GM12878 (cell line): ENCODE measurements at regions of chr1 and their contacts with region 1.

Region 1: DNA sequence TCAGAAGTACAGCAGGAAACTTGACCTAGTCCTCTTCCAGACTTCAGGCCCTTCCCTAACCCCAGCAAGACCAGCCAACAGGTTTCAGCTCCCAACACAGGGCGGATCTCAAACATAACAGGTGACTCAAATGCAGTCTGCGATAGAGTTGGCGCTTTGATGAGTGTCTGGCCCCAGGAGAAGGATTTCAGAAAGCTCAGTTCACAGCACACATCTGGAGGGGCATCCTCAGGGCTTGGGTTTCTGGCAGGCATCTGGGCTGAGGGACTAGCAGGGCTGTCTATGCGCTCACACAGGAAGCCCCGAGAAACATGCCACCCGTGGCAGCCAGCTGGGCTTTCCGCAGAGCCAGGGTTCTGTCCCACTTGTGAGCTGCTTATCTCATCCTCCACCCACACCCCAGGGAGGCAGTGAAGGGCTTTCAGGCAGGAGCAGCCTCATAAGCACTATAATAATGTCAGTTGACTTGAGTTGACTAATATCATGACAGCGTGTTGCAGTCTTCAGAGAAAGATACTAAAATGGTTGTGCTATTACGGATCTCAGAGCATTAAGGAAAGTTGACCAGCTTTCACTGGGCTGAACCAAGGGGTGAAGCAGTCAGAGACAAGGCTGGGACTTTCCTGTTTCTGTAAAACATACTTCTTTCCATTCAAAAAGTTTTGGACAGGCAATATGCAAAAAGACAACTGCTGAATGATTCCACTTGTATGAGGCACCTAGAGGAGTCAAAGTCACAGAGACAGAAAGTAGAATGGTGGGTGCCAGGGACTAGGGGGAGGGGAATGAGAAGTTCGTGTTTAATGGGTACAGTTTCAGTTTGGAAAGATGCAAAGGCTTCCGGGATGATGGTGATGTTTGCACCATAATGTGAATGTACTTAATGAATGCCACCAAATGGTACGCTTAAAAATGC is 233.0 kb upstream of the IRF2BP2 start:
- DNase-seq: peak; percentile 95
- ATAC-seq: peak; percentile 74
- H3K4me3 ChIP-seq: peak overlapping the region; percentile 58
- H3K27ac ChIP-seq: peak overlapping the region; percentile 97
- H3K4me1 ChIP-seq: peaks cover 57% of the 10 kb centered on the region
- H3K27me3 ChIP-seq: no peaks in the 10 kb centered on the region
- CTCF ChIP-seq: no peak; a peak in 1 of 6 replicates
- EP300 ChIP-seq: peak in 1 of 2 experiments; percentile 47; a peak in 1 of 4 replicates
- POLR2A ChIP-seq: peak; percentile 81
- RAD21 ChIP-seq: peak; percentile 56

Region 2: DNA sequence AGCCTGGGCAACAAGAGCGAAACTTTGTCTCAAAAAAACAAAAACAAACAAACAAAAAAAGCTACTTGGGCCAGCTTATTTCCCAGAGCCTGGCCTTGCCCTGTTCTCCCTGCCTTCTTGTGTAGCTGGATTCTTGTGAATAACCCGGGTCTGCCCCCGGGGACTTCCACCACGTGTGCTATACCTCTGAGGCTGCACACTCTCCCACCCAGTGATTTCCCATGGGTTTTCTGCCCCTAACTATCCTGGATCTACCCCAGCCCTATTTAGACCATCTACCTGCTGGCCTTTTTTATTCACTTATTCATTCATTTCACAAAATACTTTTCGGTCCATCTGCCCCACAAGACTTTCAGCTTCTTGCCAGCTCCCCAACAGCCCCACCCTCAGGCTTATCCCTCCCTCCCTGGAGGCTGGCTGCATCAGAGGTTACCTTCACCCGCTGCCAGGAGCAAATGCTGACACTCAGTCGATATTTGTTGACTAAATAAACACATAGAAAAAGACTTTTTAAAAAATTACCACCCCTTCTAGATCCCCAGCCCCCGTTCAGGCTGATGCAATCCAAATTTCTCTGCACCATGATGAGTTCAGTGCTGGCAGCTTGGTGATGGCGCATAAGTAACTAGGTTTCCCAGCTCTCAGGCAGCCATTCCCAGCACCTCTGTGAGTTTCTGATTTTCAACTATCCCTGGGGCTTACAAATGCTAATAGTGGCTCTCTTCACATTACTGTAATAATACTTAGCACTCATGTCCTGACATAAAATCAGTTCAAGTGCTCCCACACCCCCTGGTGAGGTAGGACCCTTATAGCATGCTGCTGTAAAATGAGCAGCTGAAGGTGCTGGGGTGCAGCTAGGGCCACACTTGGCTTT is 333.3 kb before region 1 on chr1:
- CTCF ChIA-PET with region 1: interaction called, 10 read pairs
- POLR2A ChIA-PET with region 1: no interaction called
- RAD21 ChIA-PET with region 1: no interaction called
- SMC1A ChIA-PET with region 1: no interaction called
- in situ Hi-C with region 1: loop called (anchors 5 kb)
- intact Hi-C with region 1: no loop called
- DNase-seq: no peak
- ATAC-seq: peak; percentile 37
- H3K4me3 ChIP-seq: no peak overlapping the region
- H3K27ac ChIP-seq: no peak overlapping the region
- H3K4me1 ChIP-seq: no peaks in the 10 kb centered on the region
- H3K27me3 ChIP-seq: no peaks in the 10 kb centered on the region
- CTCF ChIP-seq: no peak
- EP300 ChIP-seq: no peak
- POLR2A ChIP-seq: no peak
- RAD21 ChIP-seq: no peak

Region 3: DNA sequence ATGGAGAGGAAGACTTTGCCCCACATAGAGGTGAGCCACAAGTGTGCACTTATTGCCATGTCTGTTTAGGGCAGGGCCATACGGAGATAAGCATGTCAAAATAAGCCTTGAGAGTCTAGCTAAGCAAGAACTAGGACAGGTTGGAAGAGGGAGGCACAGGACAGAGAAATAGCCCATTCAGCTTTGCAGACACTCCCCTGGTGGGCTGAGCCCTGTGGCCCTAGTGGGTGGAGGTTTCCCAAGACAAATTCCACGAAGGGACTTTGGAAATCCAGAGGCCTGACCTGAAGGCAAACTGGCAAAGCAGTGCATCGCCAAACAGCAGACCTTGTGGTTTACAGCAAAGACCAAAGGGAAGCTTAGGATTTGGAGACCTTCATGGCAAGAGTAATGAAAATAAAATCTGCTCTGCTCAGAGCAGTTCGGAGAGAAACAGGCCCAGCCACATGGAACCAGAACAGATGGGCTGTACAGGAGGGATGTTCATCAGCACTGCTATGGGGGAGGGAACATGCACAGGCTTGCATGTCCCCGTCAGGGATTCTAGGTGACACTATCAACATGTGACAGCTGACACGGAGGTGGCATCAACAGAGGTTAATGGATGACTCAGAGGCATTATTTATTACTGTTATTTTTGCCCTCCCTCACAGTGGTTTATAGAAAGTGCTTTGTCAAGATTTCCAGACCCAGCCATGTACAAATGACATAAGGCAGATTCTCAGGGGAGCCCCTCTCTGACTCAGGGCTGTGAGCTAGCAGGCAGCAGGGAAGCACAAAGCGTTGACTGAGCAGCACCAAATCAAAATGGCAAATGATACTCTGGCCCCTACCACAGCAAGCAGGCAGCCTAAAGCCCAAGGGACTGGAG is 143.0 kb before region 1 on chr1:
- CTCF ChIA-PET with region 1: interaction called, 3 read pairs
- POLR2A ChIA-PET with region 1: no interaction called
- RAD21 ChIA-PET with region 1: interaction called, 4 read pairs
- SMC1A ChIA-PET with region 1: interaction called, 10 read pairs
- in situ Hi-C with region 1: no loop called
- intact Hi-C with region 1: loop called (anchors 2 kb)
- DNase-seq: peak; percentile 83
- ATAC-seq: peak; percentile 89
- H3K4me3 ChIP-seq: no peak overlapping the region
- H3K27ac ChIP-seq: peak overlapping the region; percentile 43
- H3K4me1 ChIP-seq: peaks cover 32% of the 10 kb centered on the region
- H3K27me3 ChIP-seq: no peaks in the 10 kb centered on the region
- CTCF ChIP-seq: no peak
- EP300 ChIP-seq: peak; percentile 95 to 96
- POLR2A ChIP-seq: 0 out of 2 replicates have a peak, but pooled peaks have one; percentile 23
- RAD21 ChIP-seq: 0 out of 2 replicates have a peak, but pooled peaks have one; percentile 28

Region 4: DNA sequence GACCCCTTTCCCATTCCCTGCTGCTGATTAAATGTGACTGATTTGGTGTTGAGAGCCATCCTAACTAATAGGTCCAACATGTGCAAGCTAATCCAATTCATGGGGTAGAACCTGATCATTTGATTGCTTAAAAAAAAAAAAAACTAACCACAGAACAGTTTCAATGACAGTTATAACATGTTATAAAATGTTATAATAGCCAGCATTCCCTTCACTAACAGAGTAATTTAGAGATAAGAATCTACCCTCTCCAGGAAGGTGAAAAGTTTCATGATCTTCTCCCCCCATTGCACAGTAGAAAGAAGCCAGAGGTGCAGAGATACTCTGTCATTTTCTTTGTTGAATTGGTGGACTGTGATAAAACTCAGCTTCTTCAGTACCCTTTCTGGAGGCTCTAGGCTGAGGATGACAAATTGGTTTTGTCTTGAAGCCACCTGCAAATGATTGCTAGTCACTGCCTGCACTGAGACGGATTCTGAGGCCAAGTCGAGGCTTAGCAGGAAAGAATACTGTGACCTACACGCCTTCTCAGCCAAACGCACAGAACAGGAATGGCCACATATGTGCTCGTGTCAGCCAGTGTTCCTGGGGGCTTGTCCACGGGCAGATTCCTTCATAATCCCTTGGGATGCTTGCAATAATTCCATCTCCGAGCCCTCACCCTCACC is 17.4 kb before region 1 on chr1:
- CTCF ChIA-PET with region 1: no interaction called
- POLR2A ChIA-PET with region 1: interaction called, 10 read pairs
- RAD21 ChIA-PET with region 1: interaction called, 3 read pairs
- SMC1A ChIA-PET with region 1: interaction called, 5 read pairs
- in situ Hi-C with region 1: no loop called
- intact Hi-C with region 1: no loop called
- DNase-seq: no peak
- ATAC-seq: no peak
- H3K4me3 ChIP-seq: no peak overlapping the region
- H3K27ac ChIP-seq: no peak overlapping the region
- H3K4me1 ChIP-seq: no peaks in the 10 kb centered on the region
- H3K27me3 ChIP-seq: no peaks in the 10 kb centered on the region
- CTCF ChIP-seq: no peak
- EP300 ChIP-seq: no peak
- POLR2A ChIP-seq: no peak
- RAD21 ChIP-seq: no peak

Region 5: DNA sequence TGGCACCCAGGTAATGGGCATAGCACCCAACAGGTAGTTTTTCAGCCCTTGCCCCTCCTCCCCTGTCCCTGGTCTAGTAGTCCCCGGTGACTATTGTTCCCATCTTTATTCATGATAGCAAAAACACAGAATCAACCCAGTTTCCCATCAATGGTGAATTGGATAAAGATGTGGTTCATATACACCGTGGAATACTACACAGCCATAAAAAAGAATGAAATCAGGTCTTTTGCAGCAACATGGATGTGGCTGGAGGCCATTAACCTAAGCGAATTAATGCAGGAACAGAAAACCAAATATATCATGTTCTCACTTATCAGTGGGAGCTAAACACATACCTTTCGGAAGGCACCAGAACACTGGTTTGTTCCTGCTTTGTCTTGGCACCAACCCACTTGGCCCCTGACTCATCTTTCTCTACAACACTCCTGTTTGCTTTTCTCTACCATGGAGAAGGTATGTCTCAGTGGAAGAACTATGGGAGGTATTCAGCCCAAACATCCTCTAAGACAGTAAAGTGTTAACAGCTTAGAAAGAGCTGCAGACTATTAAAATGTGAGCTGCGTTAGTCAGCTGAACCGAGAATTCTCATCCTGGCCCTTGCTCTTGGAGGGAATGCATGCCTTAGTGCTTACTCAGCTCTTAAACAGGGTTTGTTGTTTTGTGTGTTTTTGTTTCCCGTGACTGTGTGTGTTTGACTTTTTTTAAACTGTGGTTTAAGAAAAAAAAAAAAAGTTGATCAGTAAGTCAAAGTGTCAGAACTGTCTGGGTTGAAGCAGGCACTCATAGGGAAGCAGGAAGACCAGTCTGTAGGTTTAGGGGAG is 82.7 kb after region 1 on chr1:
- CTCF ChIA-PET with region 1: no interaction called
- POLR2A ChIA-PET with region 1: interaction called, 6 read pairs
- RAD21 ChIA-PET with region 1: interaction called, 32 read pairs
- SMC1A ChIA-PET with region 1: interaction called, 52 read pairs
- in situ Hi-C with region 1: no loop called
- intact Hi-C with region 1: loop called (anchors 1 kb)
- DNase-seq: peak; percentile 40
- ATAC-seq: peak; percentile 1
- H3K4me3 ChIP-seq: peak overlapping the region; percentile 40; the same call in 1 of the 2 replicates
- H3K27ac ChIP-seq: peak overlapping the region; percentile 95
- H3K4me1 ChIP-seq: peaks cover 48% of the 10 kb centered on the region
- H3K27me3 ChIP-seq: no peaks in the 10 kb centered on the region
- CTCF ChIP-seq: no peak
- EP300 ChIP-seq: no peak; a peak in 1 of 4 replicates
- POLR2A ChIP-seq: no peak
- RAD21 ChIP-seq: no peak

Region 6: GRCh38 chr1:234970731-234971476 is 127.9 kb after region 1 on chr1:
- CTCF ChIA-PET with region 1: interaction called, 3 read pairs
- POLR2A ChIA-PET with region 1: interaction called, 4 read pairs
- RAD21 ChIA-PET with region 1: interaction called, 125 read pairs
- SMC1A ChIA-PET with region 1: interaction called, 33 read pairs
- in situ Hi-C with region 1: loop called (anchors 5 kb)
- intact Hi-C with region 1: loop called (anchors 2 kb)
- DNase-seq: no peak
- ATAC-seq: peak; percentile 72
- H3K4me3 ChIP-seq: no peak overlapping the region
- H3K27ac ChIP-seq: peak overlapping the region; percentile 95
- H3K4me1 ChIP-seq: peaks cover 60% of the 10 kb centered on the region
- H3K27me3 ChIP-seq: no peaks in the 10 kb centered on the region
- CTCF ChIP-seq: no peak
- EP300 ChIP-seq: peak in 1 of 2 experiments; percentile 87; a peak in 2 of 4 replicates
- POLR2A ChIP-seq: peak; percentile 31; the same call in 1 of the 2 replicates
- RAD21 ChIP-seq: 0 out of 2 replicates have a peak, but pooled peaks have one; percentile 4

Region 7: DNA sequence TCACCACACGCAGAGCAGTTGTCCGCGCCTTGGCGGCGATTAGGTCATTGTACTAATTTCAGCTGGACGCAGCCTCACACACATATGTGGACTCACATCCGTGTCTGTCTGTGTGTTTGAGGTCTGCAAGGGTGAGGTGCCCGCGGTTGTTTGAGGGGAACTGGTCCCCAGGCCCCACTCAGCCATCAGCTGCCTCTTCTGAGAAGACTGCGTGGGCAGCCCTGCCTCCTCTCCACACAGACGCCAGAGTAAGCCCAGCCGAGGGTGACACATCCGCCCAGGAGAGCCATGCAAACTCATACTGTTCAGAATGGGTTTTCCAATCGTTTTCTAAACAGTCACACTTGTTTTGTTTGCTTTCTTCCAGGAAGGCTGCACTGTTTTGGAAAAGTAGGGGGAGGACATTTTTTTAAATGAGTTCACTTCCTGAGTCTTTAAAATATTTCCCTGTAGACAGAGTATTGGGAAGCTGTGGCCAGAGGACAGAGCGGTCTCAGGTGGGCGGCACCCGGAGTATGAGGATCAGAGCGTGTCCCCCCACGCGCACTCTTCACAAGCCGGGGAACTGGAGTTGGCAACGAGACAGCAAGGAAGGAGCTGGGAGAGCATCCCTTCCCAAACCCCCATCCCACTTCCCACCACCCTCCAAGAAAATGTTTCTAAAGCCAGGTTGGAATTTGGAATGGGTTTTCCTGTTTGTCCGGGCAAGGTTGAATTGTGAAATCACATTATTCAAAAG is 232.4 kb after region 1 on chr1:
- CTCF ChIA-PET with region 1: no interaction called
- POLR2A ChIA-PET with region 1: interaction called, 5 read pairs
- RAD21 ChIA-PET with region 1: interaction called, 5 read pairs
- SMC1A ChIA-PET with region 1: interaction called, 4 read pairs
- in situ Hi-C with region 1: loop called (anchors 5 kb)
- intact Hi-C with region 1: loop called (anchors 2 kb)
- DNase-seq: peak; percentile 98
- ATAC-seq: peak; percentile 77
- H3K4me3 ChIP-seq: peak overlapping the region; percentile 37
- H3K27ac ChIP-seq: peak overlapping the region; percentile 99
- H3K4me1 ChIP-seq: peaks cover 70% of the 10 kb centered on the region
- H3K27me3 ChIP-seq: no peaks in the 10 kb centered on the region
- CTCF ChIP-seq: no peak
- EP300 ChIP-seq: peak; percentile 99 to 100; a peak in 3 of 4 replicates
- POLR2A ChIP-seq: peak; percentile 74
- RAD21 ChIP-seq: no peak

Region 8: DNA sequence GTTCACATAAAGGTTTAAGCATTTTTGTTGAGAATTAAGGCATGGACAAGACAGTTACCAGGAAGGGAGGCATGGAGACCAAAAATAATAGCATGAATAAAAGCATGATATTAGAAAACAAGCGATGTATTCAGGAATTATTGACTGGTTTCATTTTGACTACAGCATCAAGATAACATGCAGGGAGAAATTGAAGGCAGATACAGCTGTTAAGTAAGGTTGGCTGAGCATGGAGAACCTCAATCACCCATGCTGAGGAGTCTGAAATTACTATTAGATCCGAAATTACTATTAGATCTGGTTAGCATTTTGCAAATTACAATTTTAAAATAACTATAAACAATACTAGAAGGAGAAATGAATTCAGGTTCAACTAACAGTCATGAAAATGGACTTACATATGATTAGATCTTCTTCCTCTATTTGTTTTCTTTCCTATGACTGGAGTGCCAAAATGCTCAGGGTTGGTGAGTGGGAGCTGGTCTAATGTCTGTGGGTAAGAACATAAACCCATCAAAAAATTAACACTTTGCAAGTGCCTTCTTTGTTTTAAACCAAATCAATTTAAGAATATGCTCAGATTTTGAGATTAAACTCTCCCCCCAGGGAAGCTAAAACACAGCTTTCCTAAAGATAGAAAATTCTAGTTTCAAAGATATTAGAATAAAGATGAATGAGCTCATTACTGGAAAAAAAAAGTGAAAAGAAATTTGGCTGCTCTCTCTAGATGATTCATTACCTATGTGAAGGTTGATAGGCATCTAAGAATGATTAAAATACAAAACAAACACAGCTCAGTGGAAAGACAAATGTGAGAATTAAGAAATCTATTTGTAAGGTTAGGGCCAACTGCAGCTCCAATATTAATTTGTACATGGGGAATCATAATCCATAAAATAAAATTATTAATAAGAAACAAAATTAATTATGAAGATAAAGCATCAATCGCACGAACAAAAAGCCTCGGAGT is 403.3 kb after region 1 on chr1:
- CTCF ChIA-PET with region 1: no interaction called
- POLR2A ChIA-PET with region 1: no interaction called
- RAD21 ChIA-PET with region 1: no interaction called
- SMC1A ChIA-PET with region 1: no interaction called
- in situ Hi-C with region 1: no loop called
- intact Hi-C with region 1: no loop called
- DNase-seq: no peak
- ATAC-seq: peak; percentile 65
- H3K4me3 ChIP-seq: no peak overlapping the region
- H3K27ac ChIP-seq: peak overlapping the region; percentile 6; the same call in 1 of the 2 replicates
- H3K4me1 ChIP-seq: peaks cover 11% of the 10 kb centered on the region; the same call in 1 of the 2 replicates
- H3K27me3 ChIP-seq: no peaks in the 10 kb centered on the region
- CTCF ChIP-seq: no peak
- EP300 ChIP-seq: no peak; a peak in 1 of 4 replicates
- POLR2A ChIP-seq: no peak
- RAD21 ChIP-seq: no peak